SK-N-SH (cell line): ENCODE measurements at regions of chr1 and their contacts with region 1.

Region 1: GRCh38 chr1:239951511-239952140 is 140.1 kb upstream of the FMN2 start:
- DNase-seq: peak; percentile 72
- H3K4me3 ChIP-seq: no peak overlapping the region; a peak in 1 of 4 replicates
- H3K27ac ChIP-seq: no peak overlapping the region
- H3K4me1 ChIP-seq: peaks cover 0 to 13% of the 10 kb centered on the region in 2 experiments; a peak in 2 of 4 replicates
- H3K27me3 ChIP-seq: no peaks in the 10 kb centered on the region
- CTCF ChIP-seq: peak; percentile 82
- EP300 ChIP-seq: no peak
- RAD21 ChIP-seq: peak; percentile 96

Region 2: DNA sequence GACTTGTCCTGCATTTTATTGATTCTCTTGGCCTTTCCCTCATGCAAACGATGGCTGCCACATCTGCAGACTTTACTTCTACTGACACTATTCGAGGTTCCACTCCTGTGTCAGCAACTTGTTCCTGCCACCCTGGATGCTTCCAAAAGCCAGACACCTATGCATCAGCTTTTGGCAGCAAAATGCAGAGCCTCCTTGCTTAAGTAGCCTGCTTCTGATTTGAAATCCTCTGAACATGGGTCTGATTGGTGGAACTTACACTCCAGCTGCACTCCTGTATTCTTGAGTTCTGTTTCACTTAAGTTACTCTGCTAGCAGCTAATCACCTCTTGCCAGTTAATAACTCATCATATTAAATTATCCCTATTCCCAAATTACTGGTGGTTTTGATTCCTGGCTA is 12.0 kb before region 1 on chr1:
- CTCF ChIA-PET with region 1: interaction called, 31 read pairs
- POLR2A ChIA-PET with region 1: no interaction called
- DNase-seq: peak; percentile 39
- H3K4me3 ChIP-seq: no peak overlapping the region
- H3K27ac ChIP-seq: peak overlapping the region in 1 of 2 experiments; percentile 65; a peak in 2 of 4 replicates
- H3K4me1 ChIP-seq: peaks cover 0 to 6% of the 10 kb centered on the region in 2 experiments; a peak in 2 of 4 replicates
- H3K27me3 ChIP-seq: no peaks in the 10 kb centered on the region
- CTCF ChIP-seq: no peak
- EP300 ChIP-seq: peak in 1 of 2 experiments; percentile 69; a peak in 1 of 4 replicates
- RAD21 ChIP-seq: no peak; the same call in 1 of the 2 replicates

Region 3: DNA sequence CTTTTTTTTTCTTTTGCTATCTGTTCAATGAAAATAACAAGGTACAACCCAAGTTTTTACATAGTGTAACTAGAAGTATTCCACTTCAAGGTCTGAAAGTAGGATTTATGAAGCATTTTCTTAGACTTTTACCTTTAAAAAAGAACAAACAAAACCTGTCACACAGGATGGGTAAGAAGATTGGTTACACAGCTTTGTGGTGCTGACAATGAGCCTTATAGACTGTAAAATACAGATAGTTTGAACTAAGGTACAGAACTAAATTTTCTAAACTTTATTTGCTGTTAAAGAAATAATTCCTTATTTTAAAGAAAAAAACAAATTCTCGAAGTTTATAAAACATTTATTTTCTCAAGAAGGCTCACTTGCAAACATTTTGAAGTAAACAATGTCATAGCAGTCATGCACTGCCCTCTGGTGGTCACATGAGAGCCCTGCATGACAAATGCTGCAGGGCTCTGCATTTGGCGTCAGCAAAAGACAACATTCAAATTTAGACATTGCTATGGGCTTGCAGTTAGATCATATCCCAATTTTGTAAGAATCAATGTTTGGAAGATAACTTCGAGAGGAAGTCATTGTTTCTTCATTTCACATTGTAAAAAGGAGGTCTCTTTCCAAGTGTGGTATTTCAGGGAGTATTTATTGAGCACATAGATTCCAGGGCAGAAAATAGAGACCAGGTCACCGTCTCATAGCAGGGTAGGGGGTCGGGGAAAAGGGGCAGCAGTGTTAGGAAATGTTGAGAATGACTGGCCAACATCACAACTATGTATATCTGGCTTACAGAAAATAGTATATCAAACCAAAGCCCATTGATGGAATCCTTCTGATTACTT is 24.7 kb after region 1 on chr1:
- CTCF ChIA-PET with region 1: interaction called, 324 read pairs
- POLR2A ChIA-PET with region 1: no interaction called
- DNase-seq: peak; percentile 60
- H3K4me3 ChIP-seq: no peak overlapping the region
- H3K27ac ChIP-seq: no peak overlapping the region; a peak in 1 of 4 replicates
- H3K4me1 ChIP-seq: peaks cover 0 to 9% of the 10 kb centered on the region in 2 experiments; a peak in 2 of 4 replicates
- H3K27me3 ChIP-seq: no peaks in the 10 kb centered on the region
- CTCF ChIP-seq: peak; percentile 100
- EP300 ChIP-seq: no peak
- RAD21 ChIP-seq: peak; percentile 98

Region 4: GRCh38 chr1:239987103-239987745 is 35.6 kb after region 1 on chr1:
- CTCF ChIA-PET with region 1: interaction called, 51 read pairs
- POLR2A ChIA-PET with region 1: no interaction called
- DNase-seq: no peak
- H3K4me3 ChIP-seq: no peak overlapping the region
- H3K27ac ChIP-seq: no peak overlapping the region
- H3K4me1 ChIP-seq: no peaks in the 10 kb centered on the region
- H3K27me3 ChIP-seq: no peaks in the 10 kb centered on the region
- CTCF ChIP-seq: peak; percentile 90
- EP300 ChIP-seq: no peak
- RAD21 ChIP-seq: peak; percentile 82

Region 5: GRCh38 chr1:239997160-239997514 is 45.5 kb after region 1 on chr1:
- CTCF ChIA-PET with region 1: interaction called, 38 read pairs
- POLR2A ChIA-PET with region 1: no interaction called
- DNase-seq: no peak
- H3K4me3 ChIP-seq: peak overlapping the region in 1 of 2 experiments; percentile 56; a peak in 2 of 4 replicates
- H3K27ac ChIP-seq: no peak overlapping the region
- H3K4me1 ChIP-seq: peaks cover 6 to 8% of the 10 kb centered on the region in 2 experiments; a peak in 2 of 4 replicates
- H3K27me3 ChIP-seq: peaks cover 32% of the 10 kb centered on the region; the same call in 1 of the 2 replicates
- CTCF ChIP-seq: no peak
- EP300 ChIP-seq: no peak
- RAD21 ChIP-seq: no peak

Region 6: DNA sequence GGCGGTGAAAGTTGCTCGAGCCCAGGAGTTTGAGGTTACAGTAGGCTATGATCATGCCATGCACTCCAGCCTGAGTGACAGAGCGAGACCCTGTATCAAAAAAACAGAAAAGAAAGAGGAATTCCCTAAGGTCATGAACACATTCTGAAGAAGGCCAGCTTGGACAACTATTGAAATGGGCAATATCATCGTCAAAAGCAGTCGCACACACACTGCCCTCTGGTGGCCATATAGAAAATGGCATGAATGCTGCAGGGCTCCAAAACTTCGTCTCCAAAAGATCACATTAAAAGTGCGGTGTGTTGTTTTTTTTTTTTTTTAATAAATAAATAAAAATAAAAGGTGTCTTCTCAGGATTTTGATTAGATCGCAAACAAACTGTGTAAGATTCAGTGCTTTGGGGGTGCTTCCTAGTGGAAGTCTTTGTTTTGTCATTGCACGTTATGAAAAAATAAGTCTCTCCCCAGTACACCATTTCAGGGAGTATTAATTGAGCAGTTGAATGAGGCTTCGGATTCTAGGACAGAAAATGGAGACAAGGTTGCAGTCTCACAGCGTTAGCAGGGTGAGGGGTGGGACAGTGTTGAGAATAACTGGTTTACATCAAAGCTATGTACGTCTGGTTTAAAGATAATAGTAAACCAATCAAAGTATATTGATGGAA is 52.6 kb after region 1 on chr1:
- CTCF ChIA-PET with region 1: interaction called, 10 read pairs
- POLR2A ChIA-PET with region 1: no interaction called
- DNase-seq: peak; percentile 56
- H3K4me3 ChIP-seq: no peak overlapping the region
- H3K27ac ChIP-seq: no peak overlapping the region
- H3K4me1 ChIP-seq: peaks cover 3 to 8% of the 10 kb centered on the region in 2 experiments; a peak in 1 of 4 replicates
- H3K27me3 ChIP-seq: no peaks in the 10 kb centered on the region
- CTCF ChIP-seq: peak; percentile 86
- EP300 ChIP-seq: no peak
- RAD21 ChIP-seq: peak; percentile 41